Cardiac septum (tissue), 1 donor: ENCODE measurements at regions of chr1 and their contacts with region 1.

Region 1: DNA sequence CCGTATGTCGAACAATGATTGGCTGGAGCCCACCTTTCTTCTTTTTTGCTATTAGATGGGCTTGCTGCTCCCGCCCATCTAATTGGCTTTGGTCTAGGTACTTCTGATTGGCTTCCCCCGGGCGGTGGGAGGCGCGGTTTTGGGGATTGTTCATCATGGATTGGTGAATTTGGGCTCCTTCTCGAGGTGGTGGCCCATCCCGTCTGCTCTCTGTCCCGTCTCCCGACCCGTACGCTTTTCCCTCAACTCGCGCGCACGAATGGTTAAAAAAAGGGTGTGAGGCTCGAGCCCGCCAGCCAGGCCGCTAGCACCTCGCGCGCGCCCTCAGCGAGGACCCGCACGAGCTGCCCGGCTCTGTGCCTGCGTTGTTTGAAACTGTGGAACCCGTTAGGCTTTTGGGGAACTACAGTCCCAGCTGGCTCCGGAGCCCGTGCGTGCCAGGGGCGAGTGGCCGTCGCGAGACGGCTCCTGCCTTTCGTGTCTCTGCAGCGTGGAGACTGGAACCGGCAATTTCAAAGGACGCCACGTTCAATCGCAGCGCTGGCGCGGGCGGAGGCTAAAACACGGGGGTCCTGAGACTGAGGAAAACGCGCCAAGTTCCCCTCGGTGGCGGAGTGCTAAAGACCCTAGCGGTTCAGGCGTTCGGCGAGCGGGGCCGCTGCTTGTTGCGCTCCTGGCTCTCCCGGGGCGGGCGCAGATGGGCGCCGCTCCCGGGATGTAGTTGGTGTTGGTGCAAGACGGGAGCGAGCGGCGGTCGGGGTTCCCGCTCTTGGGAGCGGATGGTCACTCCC is at the start of gene USP1:
- DNase-seq: peak; percentile 96
- total RNA-seq, gene USP1: 15.0 TPM

Region 2: DNA sequence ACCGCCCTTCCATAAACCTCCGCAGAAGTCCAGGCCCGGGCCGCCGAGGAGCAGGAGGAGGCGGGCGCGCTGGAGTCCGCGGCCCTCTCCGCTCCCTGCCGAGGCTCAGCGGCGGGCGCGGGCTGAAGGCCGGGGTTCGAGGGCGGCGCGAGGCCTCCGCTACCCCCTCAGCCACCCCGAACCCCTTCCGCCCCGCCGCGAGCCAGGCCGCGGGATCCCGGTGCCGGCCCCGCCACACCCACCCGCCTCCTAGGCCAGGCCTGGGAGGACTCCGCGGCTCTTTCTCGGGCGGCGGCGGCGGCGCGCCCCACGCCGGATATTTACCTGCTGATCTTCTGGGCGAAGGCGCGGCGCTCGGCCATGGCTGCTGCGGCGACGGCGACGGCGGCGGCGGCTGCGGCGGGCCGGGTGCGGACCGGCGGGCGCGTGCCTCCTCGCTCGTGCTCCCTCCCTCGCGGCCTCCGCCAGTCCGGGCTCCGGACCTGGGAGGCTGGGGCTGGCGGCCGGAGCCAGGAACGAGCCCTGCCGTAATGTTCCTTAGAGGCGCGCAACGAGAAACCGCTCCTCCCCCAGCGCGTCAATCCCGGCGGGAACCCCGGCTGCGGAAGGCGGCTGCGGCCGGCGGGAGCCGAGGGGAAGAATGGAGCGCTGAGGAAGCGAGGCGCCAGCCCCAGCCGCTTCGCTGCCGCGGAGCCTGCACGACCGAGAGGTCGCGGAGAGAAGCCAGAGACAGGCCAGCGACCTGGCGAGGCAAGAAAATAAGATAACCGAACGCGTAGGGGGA is 251.4 kb after region 1 on chr1 and contains the start of gene DOCK7:
- intact Hi-C with region 1: loop called (anchors 5 kb)
- DNase-seq: peak; percentile 87
- total RNA-seq, gene DOCK7: 12.8 TPM

Region 3: GRCh38 chr1:62783723-62784508 is 347.3 kb after region 1 on chr1 and contains the start of gene ATG4C:
- intact Hi-C with region 1: loop called (anchors 2 kb)
- DNase-seq: peak; percentile 97
- total RNA-seq, gene ATG4C: 7.6 TPM